Activated CD8-positive, alpha-beta T cell treated with anti-CD3 and anti-CD28 coated beads for 36 hours (primary cell): ENCODE measurements at regions of chr7 and their contacts with region 1.

Region 1: DNA sequence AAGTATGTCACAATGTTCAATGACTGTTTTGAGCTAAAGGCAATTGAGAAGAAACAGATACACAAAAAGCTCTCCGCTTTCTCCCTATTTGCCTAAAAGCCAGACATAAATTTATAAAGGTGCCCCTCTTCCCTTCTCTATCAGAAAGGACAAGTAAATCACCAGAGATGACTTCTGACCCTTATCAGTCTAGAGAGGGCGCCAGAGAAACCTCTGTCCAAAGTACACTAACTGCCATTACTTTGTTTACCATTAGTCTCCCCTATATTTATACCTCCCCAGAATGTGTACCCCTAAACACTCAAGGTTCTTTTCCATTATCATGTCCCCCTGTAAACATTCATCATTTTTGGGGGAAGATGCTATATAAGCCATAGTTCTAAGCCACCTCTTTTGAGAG is 49.3 kb downstream of the TPK1 start:
- DNase-seq: no peak
- ATAC-seq: peak; percentile 58
- H3K4me3 Mint-ChIP-seq: no peak overlapping the region
- H3K27ac Mint-ChIP-seq: no peak overlapping the region
- H3K4me1 Mint-ChIP-seq: peaks cover 11% of the 10 kb centered on the region
- H3K27me3 Mint-ChIP-seq: no peaks in the 10 kb centered on the region
- CTCF ChIP-seq: no peak

Region 2: DNA sequence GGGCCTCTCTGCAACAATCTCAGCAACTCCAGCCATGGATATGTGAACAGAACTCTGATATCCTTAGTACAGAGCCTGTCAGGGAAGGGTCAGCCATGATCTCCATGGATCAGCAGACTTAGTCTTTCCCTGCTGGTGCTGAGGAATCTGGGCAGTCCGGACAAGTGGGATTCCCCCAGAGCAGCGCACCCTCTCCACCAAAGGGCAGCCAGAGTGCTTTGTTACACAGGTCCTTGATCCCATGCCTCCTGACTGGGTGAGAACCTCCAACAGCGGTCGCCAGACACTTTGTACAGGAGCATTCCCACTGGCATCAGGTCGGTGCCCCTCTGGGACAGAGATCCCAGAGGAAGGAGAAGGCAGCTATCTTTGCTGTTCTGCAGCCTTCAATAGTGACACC is 10.4 kb after region 1 on chr7:
- CTCF ChIA-PET with region 1: interaction called, 10 read pairs
- POLR2A ChIA-PET with region 1: no interaction called
- intact Hi-C with region 1: no loop called
- DNase-seq: no peak
- ATAC-seq: no peak
- H3K4me3 Mint-ChIP-seq: no peak overlapping the region
- H3K27ac Mint-ChIP-seq: no peak overlapping the region
- H3K4me1 Mint-ChIP-seq: peaks cover 26% of the 10 kb centered on the region
- H3K27me3 Mint-ChIP-seq: no peaks in the 10 kb centered on the region
- CTCF ChIP-seq: no peak

Region 3: GRCh38 chr7:144812379-144813283 is 26.1 kb after region 1 on chr7:
- CTCF ChIA-PET with region 1: interaction called, 11 read pairs
- POLR2A ChIA-PET with region 1: interaction called, 4 read pairs
- intact Hi-C with region 1: no loop called
- DNase-seq: peak; percentile 62
- ATAC-seq: peak; percentile 91
- H3K4me3 Mint-ChIP-seq: peak overlapping the region; percentile 64
- H3K27ac Mint-ChIP-seq: peak overlapping the region; percentile 92
- H3K4me1 Mint-ChIP-seq: peaks cover 59% of the 10 kb centered on the region
- H3K27me3 Mint-ChIP-seq: no peaks in the 10 kb centered on the region
- CTCF ChIP-seq: no peak

Region 4: GRCh38 chr7:144969787-144970186 is 183.3 kb after region 1 on chr7:
- CTCF ChIA-PET with region 1: no interaction called
- POLR2A ChIA-PET with region 1: no interaction called
- intact Hi-C with region 1: no loop called
- DNase-seq: no peak
- ATAC-seq: no peak
- H3K4me3 Mint-ChIP-seq: no peak overlapping the region
- H3K27ac Mint-ChIP-seq: no peak overlapping the region
- H3K4me1 Mint-ChIP-seq: no peaks in the 10 kb centered on the region
- H3K27me3 Mint-ChIP-seq: peaks cover 6% of the 10 kb centered on the region
- CTCF ChIP-seq: no peak